K562 (cell line): ENCODE measurements at regions of chr19 and their contacts with region 1.

Region 1: GRCh38 chr19:15365264-15365663 is 14.3 kb downstream of the AKAP8 start:
- DNase-seq: no peak
- ATAC-seq: peak; percentile 53
- H3K4me3 ChIP-seq: no peak overlapping the region
- H3K27ac ChIP-seq: no peak overlapping the region
- H3K4me1 ChIP-seq: no peaks in the 10 kb centered on the region
- H3K27me3 ChIP-seq: no peaks in the 10 kb centered on the region
- CTCF ChIP-seq: peak in 1 of 3 experiments; percentile 34; a peak in 1 of 6 replicates
- EP300 ChIP-seq: no peak
- POLR2A ChIP-seq: 0 out of 2 replicates have a peak, but pooled peaks have one; percentile 27
- RAD21 ChIP-seq: no peak

Region 2: DNA sequence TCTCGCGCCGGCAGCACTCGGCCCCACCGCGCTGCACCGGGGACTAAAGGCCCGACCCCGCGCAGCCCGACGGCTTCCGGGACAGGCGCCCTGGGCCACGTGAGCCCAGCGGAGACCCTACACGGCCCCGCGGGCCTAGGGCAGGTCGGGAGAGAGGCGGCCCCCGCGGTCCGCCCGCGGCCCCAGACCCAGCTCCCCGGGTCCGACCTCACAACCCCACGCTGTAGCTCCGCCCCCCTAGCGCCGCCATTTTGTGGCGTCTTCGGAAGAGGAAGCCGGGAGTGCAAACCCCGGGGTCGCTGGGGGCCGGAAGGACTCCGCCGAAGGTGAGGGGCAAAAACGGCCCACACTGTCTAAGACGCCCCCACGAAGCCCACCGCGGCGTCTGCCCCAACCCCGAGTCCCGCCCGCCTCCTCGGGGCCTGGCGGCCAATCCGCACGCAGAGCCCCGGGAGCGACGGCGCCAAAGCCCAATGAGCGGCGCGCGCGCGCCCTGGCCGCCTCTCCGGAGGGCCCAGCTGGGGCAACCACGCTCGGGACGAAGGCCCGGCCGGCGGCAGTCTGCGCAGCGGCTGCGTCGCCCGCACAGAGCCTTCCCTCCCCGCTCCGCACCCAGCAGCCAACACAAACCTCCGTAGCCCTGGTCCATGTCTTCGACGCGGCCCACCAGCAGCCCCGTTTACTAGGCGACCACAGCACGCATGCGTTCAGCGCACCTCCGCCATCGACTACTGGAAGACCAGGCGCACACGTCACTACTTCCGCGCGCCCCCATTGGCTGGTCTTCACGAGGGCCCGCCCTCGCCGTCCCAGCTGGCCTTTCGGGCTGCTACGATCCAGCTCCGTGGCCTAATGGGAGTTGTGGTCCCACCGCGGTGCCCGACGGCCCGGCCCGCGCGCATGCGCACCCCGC is 14.1 kb after region 1 on chr19 and contains the start of gene AKAP8:
- CTCF ChIA-PET with region 1: no interaction called
- POLR2A ChIA-PET with region 1: interaction called, 21 read pairs
- in situ Hi-C with region 1: no loop called
- intact Hi-C with region 1: no loop called
- DNase-seq: peak; percentile 97 to 99 (median 98)
- ATAC-seq: peak; percentile 91
- H3K4me3 ChIP-seq: peak within 1 kb of the TSS; percentile 90
- H3K27ac ChIP-seq: peak within 1 kb of the TSS; percentile 89
- H3K4me1 ChIP-seq: peaks cover 16 to 37% of the 10 kb centered on the region in 2 experiments
- H3K27me3 ChIP-seq: no peaks in the 10 kb centered on the region; a peak in 1 of 5 replicates
- CTCF ChIP-seq: no peak
- EP300 ChIP-seq: no peak
- POLR2A ChIP-seq: peak; percentile 93
- RAD21 ChIP-seq: no peak
- polyA plus RNA-seq, gene AKAP8: 3.4 to 4.4 TPM

Region 3: DNA sequence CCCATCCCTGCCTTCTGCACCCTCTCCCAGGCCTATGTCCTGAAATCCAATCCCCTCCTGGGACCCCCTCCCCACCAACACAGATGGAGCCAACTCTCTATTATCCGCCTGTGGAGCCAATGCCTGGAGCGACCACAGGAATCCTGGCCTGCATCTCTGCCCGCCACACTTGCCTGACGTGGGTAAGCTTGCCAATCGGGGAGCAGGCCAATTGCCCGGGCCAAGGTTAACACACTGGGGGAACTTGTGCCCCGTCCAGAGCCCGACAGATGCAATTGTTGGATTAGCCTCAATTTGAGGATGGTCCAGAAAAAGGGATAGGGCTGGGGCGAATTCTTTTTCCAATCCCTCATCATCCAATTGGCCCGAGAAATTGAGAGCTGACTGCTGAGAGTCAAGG is 78.6 kb after region 1 on chr19:
- CTCF ChIA-PET with region 1: no interaction called
- POLR2A ChIA-PET with region 1: no interaction called
- in situ Hi-C with region 1: no loop called
- intact Hi-C with region 1: no loop called
- DNase-seq: no peak
- ATAC-seq: no peak
- H3K4me3 ChIP-seq: no peak overlapping the region
- H3K27ac ChIP-seq: no peak overlapping the region
- H3K4me1 ChIP-seq: peaks cover 3 to 31% of the 10 kb centered on the region in 2 experiments
- H3K27me3 ChIP-seq: peaks cover 17 to 67% of the 10 kb centered on the region in 2 experiments; a peak in 4 of 5 replicates
- CTCF ChIP-seq: no peak
- EP300 ChIP-seq: no peak
- POLR2A ChIP-seq: no peak
- RAD21 ChIP-seq: no peak